H1 (cell line): ENCODE measurements at regions of chr15 and their contacts with region 1.

Region 1: DNA sequence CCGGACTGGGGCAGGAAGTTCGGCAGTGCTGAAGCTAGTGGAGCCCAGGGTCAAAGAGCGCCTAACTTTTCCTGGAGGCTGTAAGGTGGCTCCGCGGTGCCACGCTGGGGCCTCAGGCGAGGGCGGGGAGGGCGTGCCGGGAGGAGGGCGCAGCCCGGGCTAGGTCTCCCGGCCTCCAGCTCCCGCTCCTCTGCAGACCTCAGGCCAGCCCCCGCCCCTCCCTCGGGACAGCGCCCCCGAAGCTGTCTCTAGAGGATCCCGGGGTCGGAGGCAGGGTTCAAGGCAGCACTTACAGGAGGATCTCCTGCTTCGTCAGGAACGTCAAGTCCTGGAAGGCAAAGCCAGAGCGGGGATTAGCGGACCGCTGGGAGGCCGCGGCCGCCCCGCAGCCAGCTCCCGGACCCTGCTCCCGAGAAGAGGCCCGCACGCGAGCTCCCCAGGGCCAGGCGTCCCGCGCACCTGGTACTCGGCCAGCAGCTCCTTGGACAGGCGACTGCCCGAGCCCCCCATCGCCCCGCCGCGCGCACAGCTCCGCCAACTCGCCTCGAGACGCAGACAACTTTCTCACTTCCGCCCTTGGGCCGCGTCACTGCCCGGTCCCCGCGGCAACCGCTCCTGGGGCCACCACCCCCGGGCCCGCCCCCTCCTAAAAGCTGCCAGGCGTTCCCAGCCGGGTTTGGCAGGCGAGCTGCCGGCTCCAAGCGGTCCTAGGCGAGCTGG is at the start of gene CIB1:
- DNase-seq: peak; percentile 76 to 94
- H3K4me3 ChIP-seq: peak within 1 kb of the TSS; percentile 57 to 76 (median 73)
- H3K27ac ChIP-seq: no peak within 1 kb of the TSS
- H3K4me1 ChIP-seq: peaks cover 0 to 6% (median under 1%) of the 10 kb centered on the region in 4 experiments; a peak in 4 of 7 replicates
- H3K27me3 ChIP-seq: no peaks in the 10 kb centered on the region
- CTCF ChIP-seq: peak in 2 of 3 experiments; percentile 71 to 76; a peak in 3 of 4 replicates
- EP300 ChIP-seq: no peak
- POLR2A ChIP-seq: peak in 1 of 2 experiments; percentile 67; a peak in 2 of 3 replicates
- RAD21 ChIP-seq: no peak
- total RNA-seq, gene CIB1: 26.0 and 29.1 TPM in 2 replicates

Region 2: DNA sequence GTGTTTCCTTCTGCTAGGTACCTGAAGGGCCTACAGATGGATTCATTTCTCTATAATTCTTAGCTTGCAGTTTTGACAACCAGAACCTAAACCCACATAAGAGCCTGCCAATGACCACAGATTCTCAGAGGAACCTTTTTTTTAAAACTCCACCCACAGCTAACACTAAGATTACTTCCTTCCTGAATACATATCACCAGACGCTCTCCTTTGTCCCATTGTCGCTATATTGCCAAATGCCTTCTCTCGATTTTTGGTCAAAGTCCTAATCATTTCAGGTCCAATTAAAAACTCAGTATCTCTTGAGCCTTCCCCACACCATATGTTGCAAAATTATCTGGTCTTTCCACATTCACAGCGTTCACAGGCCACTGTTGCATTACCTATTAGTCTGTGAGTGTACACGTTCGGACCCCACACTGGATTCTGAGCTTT is 220.0 kb before region 1 on chr15:
- CTCF ChIA-PET with region 1: no interaction called
- POLR2A ChIA-PET with region 1: no interaction called
- DNase-seq: no peak
- H3K4me3 ChIP-seq: no peak overlapping the region
- H3K27ac ChIP-seq: no peak overlapping the region
- H3K4me1 ChIP-seq: peaks cover 0 to 7% (median 0%) of the 10 kb centered on the region in 4 experiments; a peak in 2 of 7 replicates
- H3K27me3 ChIP-seq: no peaks in the 10 kb centered on the region
- CTCF ChIP-seq: no peak
- EP300 ChIP-seq: no peak
- POLR2A ChIP-seq: no peak
- RAD21 ChIP-seq: no peak

Region 3: GRCh38 chr15:90161950-90162361 is 71.6 kb before region 1 on chr15:
- CTCF ChIA-PET with region 1: interaction called, 10 read pairs
- POLR2A ChIA-PET with region 1: no interaction called
- DNase-seq: no peak
- H3K4me3 ChIP-seq: no peak overlapping the region
- H3K27ac ChIP-seq: no peak overlapping the region
- H3K4me1 ChIP-seq: peaks cover 0 to 17% (median 8%) of the 10 kb centered on the region in 4 experiments; a peak in 4 of 7 replicates
- H3K27me3 ChIP-seq: no peaks in the 10 kb centered on the region
- CTCF ChIP-seq: no peak
- EP300 ChIP-seq: no peak
- POLR2A ChIP-seq: no peak
- RAD21 ChIP-seq: no peak

Region 4: DNA sequence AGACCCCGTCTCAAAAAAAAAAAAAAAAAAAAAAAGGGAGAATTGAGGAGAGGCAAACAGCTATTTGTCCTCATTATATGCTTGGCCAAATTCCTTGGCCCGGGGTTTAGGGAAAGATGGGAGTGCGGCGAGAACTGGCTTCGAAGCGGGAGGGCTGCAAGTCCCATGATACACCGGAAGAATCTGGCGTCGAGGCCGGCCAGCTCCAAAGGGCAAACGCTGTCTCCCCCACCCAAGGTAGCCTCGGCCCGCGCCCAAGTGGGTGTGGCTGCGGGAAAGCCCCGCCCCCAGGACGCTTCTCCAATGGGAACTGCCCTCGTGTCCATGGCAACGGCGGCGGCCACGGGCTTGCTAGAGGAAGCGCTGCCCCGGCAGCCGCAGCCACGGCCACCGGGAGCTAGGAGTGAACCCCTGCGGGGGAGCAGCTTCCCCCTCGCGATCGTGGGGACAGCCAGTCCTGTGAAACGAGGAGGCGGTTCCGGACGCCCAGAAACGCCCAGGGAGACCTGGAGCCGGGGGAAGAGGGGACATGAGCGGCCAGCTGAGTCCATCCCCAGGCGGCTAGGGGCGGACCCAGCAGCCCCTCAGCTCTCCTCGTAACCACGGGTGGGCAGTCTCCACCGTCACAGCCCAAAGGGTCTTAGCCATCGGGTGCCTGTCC is 15.8 kb after region 1 on chr15 and contains the start of gene TTLL13:
- CTCF ChIA-PET with region 1: interaction called, 17 read pairs
- POLR2A ChIA-PET with region 1: interaction called, 9 read pairs
- DNase-seq: peak; percentile 67 to 100
- H3K4me3 ChIP-seq: peak within 1 kb of the TSS; percentile 64 to 75 (median 66)
- H3K27ac ChIP-seq: no peak within 1 kb of the TSS
- H3K4me1 ChIP-seq: peaks cover 0 to 4% (median 0%) of the 10 kb centered on the region in 4 experiments; a peak in 2 of 7 replicates
- H3K27me3 ChIP-seq: peaks cover 0 to 3% (median 1%) of the 10 kb centered on the region in 4 experiments; a peak in 1 of 7 replicates
- CTCF ChIP-seq: no peak
- EP300 ChIP-seq: no peak
- POLR2A ChIP-seq: no peak
- RAD21 ChIP-seq: no peak
- total RNA-seq, gene TTLL13: 0.19 TPM in 1 of 2 replicates, not detected in the other

Region 5: DNA sequence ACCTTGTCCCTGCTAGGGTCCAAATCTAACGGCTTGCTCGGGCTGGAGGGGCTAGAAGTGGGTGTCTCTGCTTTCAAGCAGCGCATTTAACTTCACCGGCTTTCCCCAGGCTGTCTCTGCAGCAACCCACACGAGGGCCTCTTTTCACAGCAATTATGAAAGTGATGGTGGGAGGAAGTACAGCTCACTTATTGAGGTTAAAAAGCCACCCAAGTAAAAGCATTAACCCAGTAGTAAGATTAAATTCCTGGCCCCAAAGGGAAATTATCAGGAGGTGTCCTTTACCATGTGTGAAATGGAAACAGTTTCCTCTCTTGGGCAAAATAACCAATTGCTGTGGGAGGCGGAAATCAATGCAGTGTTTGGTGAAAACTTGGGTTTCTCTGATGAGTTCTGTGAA is 73.0 kb after region 1 on chr15:
- CTCF ChIA-PET with region 1: no interaction called
- POLR2A ChIA-PET with region 1: no interaction called
- DNase-seq: no peak
- H3K4me3 ChIP-seq: no peak overlapping the region
- H3K27ac ChIP-seq: no peak overlapping the region
- H3K4me1 ChIP-seq: peaks cover 0 to under 1% (median 0%) of the 10 kb centered on the region in 4 experiments; a peak in 1 of 7 replicates
- H3K27me3 ChIP-seq: no peaks in the 10 kb centered on the region
- CTCF ChIP-seq: no peak
- EP300 ChIP-seq: no peak
- POLR2A ChIP-seq: no peak
- RAD21 ChIP-seq: no peak

Region 6: DNA sequence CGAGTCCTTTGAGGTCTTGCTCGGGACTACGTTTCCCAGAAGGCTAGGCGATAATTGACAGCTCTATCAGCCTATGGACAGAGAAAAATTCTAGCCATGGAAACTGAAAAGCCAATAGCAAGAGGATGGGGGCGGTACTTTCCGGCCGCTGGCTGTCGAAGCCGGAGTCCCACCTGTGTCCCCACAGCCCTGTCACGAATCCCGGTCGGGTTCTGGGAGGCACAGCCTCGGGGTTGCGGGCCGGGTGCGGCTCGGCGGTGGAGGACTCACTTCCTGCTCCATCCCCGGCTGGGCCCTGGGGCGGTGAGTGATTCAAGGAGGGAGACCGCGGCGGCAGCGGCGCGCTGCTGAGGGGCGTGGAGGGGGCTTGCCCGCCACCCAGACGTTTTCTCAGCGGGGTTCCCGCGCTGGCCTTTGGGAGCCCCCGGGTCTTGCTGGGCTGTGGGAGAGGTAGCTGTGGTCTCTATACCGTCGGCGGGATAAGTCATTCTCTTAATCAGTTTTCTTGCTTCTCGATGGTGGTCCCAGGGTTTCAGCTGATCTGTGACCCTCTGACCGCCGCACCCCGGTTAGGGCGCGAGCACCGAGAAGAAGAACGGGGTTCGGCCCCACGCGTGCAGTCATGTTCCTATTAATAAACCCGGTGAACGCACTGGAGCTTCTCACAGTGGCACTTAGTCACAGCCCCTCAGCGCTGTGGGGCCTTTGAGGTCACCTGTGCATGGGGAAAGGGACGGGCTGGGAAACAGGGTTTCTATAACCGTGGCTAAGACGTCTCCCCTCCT is 118.8 kb after region 1 on chr15 and contains the start of gene ZNF774:
- CTCF ChIA-PET with region 1: no interaction called
- POLR2A ChIA-PET with region 1: no interaction called
- DNase-seq: peak in 1 of 2 experiments; percentile 87
- H3K4me3 ChIP-seq: peak within 1 kb of the TSS; percentile 60 to 82 (median 66)
- H3K27ac ChIP-seq: no peak within 1 kb of the TSS
- H3K4me1 ChIP-seq: no peaks in the 10 kb centered on the region; a peak in 1 of 7 replicates
- H3K27me3 ChIP-seq: no peaks in the 10 kb centered on the region
- CTCF ChIP-seq: no peak
- EP300 ChIP-seq: no peak
- POLR2A ChIP-seq: no peak
- RAD21 ChIP-seq: no peak
- total RNA-seq, gene ZNF774: 2.3 and 2.6 TPM in 2 replicates